GM12878 (cell line): ENCODE measurements at regions of chr1 and their contacts with region 1.

Region 1: DNA sequence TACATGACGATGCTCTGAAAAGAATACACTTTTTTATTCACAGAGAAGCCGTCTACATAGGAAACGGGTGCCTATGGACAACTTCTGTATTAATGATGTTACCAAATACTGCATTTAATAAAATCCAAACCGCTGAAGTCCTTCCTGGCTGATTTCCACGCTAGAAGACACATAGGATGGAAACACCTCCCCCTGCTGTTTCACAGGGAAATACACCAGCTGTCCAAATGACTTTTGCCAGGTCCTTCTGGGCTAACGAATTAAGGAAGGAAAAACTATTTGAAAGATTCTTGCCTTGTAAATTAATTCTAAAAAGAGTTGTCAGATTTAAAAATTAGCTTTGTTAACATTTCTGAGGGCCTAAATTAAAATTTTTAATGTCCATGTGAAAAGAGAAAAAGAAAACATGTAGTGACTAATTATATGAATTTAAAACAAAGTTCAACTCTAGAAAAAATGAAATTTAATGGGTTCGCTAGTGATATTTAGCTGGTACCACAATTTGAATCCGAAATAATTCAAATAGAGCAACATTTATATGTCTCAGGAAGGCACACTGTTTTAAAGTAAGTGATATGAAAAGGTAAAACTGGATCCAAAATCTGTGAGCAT is 146.0 kb downstream of the RERE start:
- DNase-seq: no peak
- ATAC-seq: 0 out of 3 replicates have a peak, but pooled peaks have one; percentile 24
- H3K4me3 ChIP-seq: no peak overlapping the region
- H3K27ac ChIP-seq: no peak overlapping the region
- H3K4me1 ChIP-seq: peaks cover 31% of the 10 kb centered on the region
- H3K27me3 ChIP-seq: no peaks in the 10 kb centered on the region
- CTCF ChIP-seq: peak; percentile 76 to 80 (median 79)
- EP300 ChIP-seq: no peak
- POLR2A ChIP-seq: no peak
- RAD21 ChIP-seq: peak; percentile 94

Region 2: DNA sequence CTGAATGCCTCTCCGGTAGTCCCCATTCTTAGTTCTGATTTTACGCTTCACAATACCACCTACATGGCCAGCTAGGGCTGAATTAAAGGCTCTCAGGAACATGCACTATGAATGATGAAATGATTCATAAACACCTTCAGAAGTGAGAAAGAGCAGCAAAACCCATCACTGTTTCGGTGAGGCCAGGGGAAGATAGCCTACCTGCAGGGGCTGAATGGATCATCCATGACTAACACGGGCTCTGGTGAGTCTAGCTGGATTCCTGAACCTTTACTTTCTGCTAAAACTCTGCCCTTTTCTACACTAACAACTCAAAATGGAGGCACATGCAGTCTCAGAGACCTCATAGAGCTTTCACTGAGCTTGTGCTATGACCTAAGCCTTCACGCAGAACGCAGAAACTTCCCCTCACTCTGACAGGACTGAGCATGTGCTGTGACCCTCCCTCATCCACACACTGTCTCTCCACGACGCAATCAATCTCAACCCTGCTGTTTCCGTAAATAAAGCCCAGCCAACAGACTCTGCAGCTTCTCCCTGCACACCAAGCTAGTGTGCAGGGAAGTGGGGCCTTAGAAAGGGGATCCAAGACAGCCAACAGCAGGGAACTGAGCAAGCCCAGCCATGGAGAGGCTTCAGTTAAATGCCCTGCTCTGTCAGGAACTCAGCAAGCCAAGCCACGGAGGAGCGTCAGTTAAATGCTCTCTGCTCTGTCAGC is 145.7 kb before region 1 on chr1:
- CTCF ChIA-PET with region 1: interaction called, 3 read pairs
- POLR2A ChIA-PET with region 1: interaction called, 4 read pairs
- RAD21 ChIA-PET with region 1: interaction called, 15 read pairs
- SMC1A ChIA-PET with region 1: interaction called, 5 read pairs
- in situ Hi-C with region 1: no loop called
- intact Hi-C with region 1: no loop called
- DNase-seq: peak; percentile 66
- ATAC-seq: peak; percentile 85
- H3K4me3 ChIP-seq: peak overlapping the region; percentile 67
- H3K27ac ChIP-seq: peak overlapping the region; percentile 67
- H3K4me1 ChIP-seq: peaks cover 23% of the 10 kb centered on the region
- H3K27me3 ChIP-seq: no peaks in the 10 kb centered on the region
- CTCF ChIP-seq: no peak
- EP300 ChIP-seq: no peak
- POLR2A ChIP-seq: no peak; the same call in 1 of the 2 replicates
- RAD21 ChIP-seq: no peak

Region 3: DNA sequence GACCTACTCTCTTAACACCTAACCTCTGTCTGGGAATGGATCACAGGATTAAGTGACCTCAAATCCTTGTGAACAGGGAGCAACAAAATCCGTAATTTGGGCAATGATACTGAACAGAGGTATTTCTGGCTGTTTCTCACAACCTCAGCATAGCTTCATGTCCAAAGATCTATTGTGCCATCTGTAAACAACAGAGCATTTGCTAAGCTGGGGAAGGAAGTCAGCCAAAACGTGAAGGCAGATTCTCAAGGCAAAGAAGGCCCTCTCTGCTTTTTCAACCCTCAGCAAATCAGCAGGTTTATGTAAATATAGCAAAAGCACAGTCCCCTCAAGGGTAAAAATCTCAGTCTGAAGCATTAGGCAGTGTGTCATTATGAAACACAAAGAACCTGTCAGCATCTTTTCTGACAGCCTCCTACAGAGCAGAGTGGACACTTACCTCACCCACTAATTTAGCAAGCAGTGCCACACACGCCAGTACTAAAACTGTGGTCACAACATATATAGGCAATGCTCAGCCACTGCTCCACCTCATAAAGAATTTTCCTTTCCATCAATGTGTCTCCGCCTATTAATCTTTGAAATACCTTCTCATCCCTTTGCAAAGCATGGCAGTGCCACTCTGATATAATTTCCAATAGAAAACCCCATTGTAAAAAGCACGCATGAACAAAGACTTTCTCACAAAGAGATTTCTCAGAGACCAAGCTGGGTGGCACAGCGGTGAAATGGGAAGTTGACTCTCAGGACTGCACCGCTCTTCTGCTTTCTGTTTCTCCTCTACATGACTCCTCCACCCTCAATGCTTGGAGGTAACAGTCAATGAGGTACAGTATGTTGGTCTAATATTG is 41.9 kb before region 1 on chr1:
- CTCF ChIA-PET with region 1: interaction called, 14 read pairs
- POLR2A ChIA-PET with region 1: interaction called, 7 read pairs
- RAD21 ChIA-PET with region 1: interaction called, 21 read pairs
- SMC1A ChIA-PET with region 1: interaction called, 98 read pairs
- in situ Hi-C with region 1: no loop called
- intact Hi-C with region 1: no loop called
- DNase-seq: peak; percentile 91
- ATAC-seq: peak; percentile 95
- H3K4me3 ChIP-seq: peak overlapping the region; percentile 43; the same call in 1 of the 2 replicates
- H3K27ac ChIP-seq: peak overlapping the region; percentile 86
- H3K4me1 ChIP-seq: peaks cover 42% of the 10 kb centered on the region
- H3K27me3 ChIP-seq: no peaks in the 10 kb centered on the region
- CTCF ChIP-seq: no peak
- EP300 ChIP-seq: peak; percentile 24 to 52; a peak in 2 of 4 replicates
- POLR2A ChIP-seq: 0 out of 2 replicates have a peak, but pooled peaks have one; percentile 15
- RAD21 ChIP-seq: no peak

Region 4: GRCh38 chr1:8660411-8660828 is 11.0 kb before region 1 on chr1:
- CTCF ChIA-PET with region 1: interaction called, 22 read pairs
- POLR2A ChIA-PET with region 1: interaction called, 7 read pairs
- RAD21 ChIA-PET with region 1: interaction called, 384 read pairs
- SMC1A ChIA-PET with region 1: interaction called, 587 read pairs
- in situ Hi-C with region 1: no loop called
- intact Hi-C with region 1: no loop called
- DNase-seq: no peak
- ATAC-seq: peak; percentile 41
- H3K4me3 ChIP-seq: peak overlapping the region; percentile 56; the same call in 1 of the 2 replicates
- H3K27ac ChIP-seq: peak overlapping the region; percentile 79
- H3K4me1 ChIP-seq: peaks cover 47% of the 10 kb centered on the region
- H3K27me3 ChIP-seq: no peaks in the 10 kb centered on the region
- CTCF ChIP-seq: no peak
- EP300 ChIP-seq: no peak
- POLR2A ChIP-seq: peak; percentile 53
- RAD21 ChIP-seq: no peak

Region 5: GRCh38 chr1:8702850-8703810 is 31.7 kb after region 1 on chr1:
- CTCF ChIA-PET with region 1: interaction called, 28 read pairs
- POLR2A ChIA-PET with region 1: interaction called, 3 read pairs
- RAD21 ChIA-PET with region 1: interaction called, 21 read pairs
- SMC1A ChIA-PET with region 1: interaction called, 142 read pairs
- in situ Hi-C with region 1: no loop called
- intact Hi-C with region 1: loop called (anchors 2 kb)
- DNase-seq: no peak
- ATAC-seq: peak; percentile 75
- H3K4me3 ChIP-seq: peak overlapping the region; percentile 57
- H3K27ac ChIP-seq: peak overlapping the region; percentile 54
- H3K4me1 ChIP-seq: no peaks in the 10 kb centered on the region; the same call in 1 of the 2 replicates
- H3K27me3 ChIP-seq: no peaks in the 10 kb centered on the region
- CTCF ChIP-seq: peak; percentile 6 to 55 (median 17); a peak in 3 of 6 replicates
- EP300 ChIP-seq: no peak
- POLR2A ChIP-seq: peak; percentile 87
- RAD21 ChIP-seq: peak; percentile 29; the same call in 1 of the 2 replicates

Region 6: GRCh38 chr1:8848663-8849386 is 177.4 kb after region 1 on chr1:
- CTCF ChIA-PET with region 1: interaction called, 27 read pairs
- POLR2A ChIA-PET with region 1: interaction called, 3 read pairs
- RAD21 ChIA-PET with region 1: interaction called, 14 read pairs
- SMC1A ChIA-PET with region 1: interaction called, 11 read pairs
- in situ Hi-C with region 1: no loop called
- intact Hi-C with region 1: no loop called
- DNase-seq: no peak
- ATAC-seq: peak; percentile 98
- H3K4me3 ChIP-seq: no peak overlapping the region
- H3K27ac ChIP-seq: no peak overlapping the region
- H3K4me1 ChIP-seq: peaks cover 2% of the 10 kb centered on the region; the same call in 1 of the 2 replicates
- H3K27me3 ChIP-seq: no peaks in the 10 kb centered on the region
- CTCF ChIP-seq: peak; percentile 82 to 95 (median 87)
- EP300 ChIP-seq: no peak
- POLR2A ChIP-seq: no peak
- RAD21 ChIP-seq: peak; percentile 87